ENCODE measurements at regions of chr7 and their contacts with region 1.

Region 1: GRCh38 chr7:117019786-117020590 is 66.7 kb downstream of the ST7 start:
- DNase-seq: peak; percentile 72 to 82
- ATAC-seq: peak; percentile 86
- H3K4me3 ChIP-seq: peak overlapping the region; percentile 36 to 92
- H3K27ac ChIP-seq: peak overlapping the region in 1 of 2 donors; percentile 89
- H3K4me1 ChIP-seq: peaks cover 2% of the 10 kb centered on the region in 2 donors
- H3K27me3 ChIP-seq: no peaks in the 10 kb centered on the region

Region 2: GRCh38 chr7:117061751-117062150 is 41.8 kb after region 1 on chr7:
- intact Hi-C with region 1: loop called in 1 of 2 experiments (anchors 5 kb)
- DNase-seq: no peak
- ATAC-seq: no peak
- H3K4me3 ChIP-seq: no peak overlapping the region
- H3K27ac ChIP-seq: no peak overlapping the region
- H3K4me1 ChIP-seq: peaks cover 0 to 4% of the 10 kb centered on the region in 2 donors
- H3K27me3 ChIP-seq: no peaks in the 10 kb centered on the region

Region 3: GRCh38 chr7:117169907-117170306 is 149.9 kb after region 1 on chr7:
- intact Hi-C with region 1: no loop called
- DNase-seq: peak in 1 of 2 donors; percentile 48
- ATAC-seq: no peak
- H3K4me3 ChIP-seq: no peak overlapping the region
- H3K27ac ChIP-seq: peak overlapping the region; percentile 43 to 47
- H3K4me1 ChIP-seq: peaks cover 0 to 2% of the 10 kb centered on the region in 2 donors
- H3K27me3 ChIP-seq: no peaks in the 10 kb centered on the region